ENCODE measurements at regions of chr6 and their contacts with region 1.

Region 1: DNA sequence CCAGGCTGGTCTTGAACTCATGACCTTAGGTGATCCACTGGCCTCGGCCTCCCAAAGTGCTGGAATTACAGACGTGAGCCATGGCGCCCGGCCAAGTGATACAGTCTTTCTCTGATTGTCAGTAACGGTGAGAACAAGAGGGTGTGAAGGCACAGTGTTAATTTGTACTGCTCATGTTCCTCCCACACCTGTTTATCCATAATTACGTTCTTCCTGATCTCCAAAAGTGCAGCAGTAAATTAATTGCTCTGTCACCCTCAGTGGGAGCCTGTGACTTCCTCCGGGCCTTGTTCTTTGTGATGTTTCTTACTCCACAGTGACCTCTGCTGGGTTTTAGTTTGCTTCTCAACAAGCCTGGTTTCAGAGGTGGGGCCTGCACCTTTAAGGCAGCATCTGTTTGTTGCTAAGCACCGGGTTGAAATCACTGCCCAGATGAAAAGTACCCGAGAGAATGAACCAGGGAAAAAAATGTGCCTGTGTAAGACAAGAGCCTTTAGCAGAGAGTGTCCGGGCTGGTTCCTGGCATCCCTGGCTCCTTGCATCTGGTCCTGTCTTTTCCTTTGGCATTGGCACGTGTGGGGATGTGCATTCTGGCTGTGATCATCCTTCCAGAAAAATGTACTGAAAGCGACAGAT is 89.1 kb upstream of the CLDN20 start:
- DNase-seq: no peak
- H3K4me3 ChIP-seq: no peak overlapping the region
- H3K27ac ChIP-seq: peak overlapping the region in 1 of 4 donors; percentile 31
- H3K4me1 ChIP-seq: peaks cover 17 to 37% (median 32%) of the 10 kb centered on the region in 4 donors
- H3K27me3 ChIP-seq: no peaks in the 10 kb centered on the region
- CTCF ChIP-seq: peak; percentile 62 to 72 (median 62)
- EP300 ChIP-seq: no peak
- POLR2A ChIP-seq: no peak

Region 2: GRCh38 chr6:154868143-154868594 is 306.5 kb before region 1 on chr6:
- intact Hi-C with region 1: loop called (anchors 5 kb)
- DNase-seq: no peak
- H3K4me3 ChIP-seq: no peak overlapping the region
- H3K27ac ChIP-seq: no peak overlapping the region
- H3K4me1 ChIP-seq: peaks cover 0 to 7% (median 5%) of the 10 kb centered on the region in 4 donors
- H3K27me3 ChIP-seq: no peaks in the 10 kb centered on the region
- CTCF ChIP-seq: peak; percentile 62 to 77 (median 64)
- EP300 ChIP-seq: no peak
- POLR2A ChIP-seq: no peak

Region 3: DNA sequence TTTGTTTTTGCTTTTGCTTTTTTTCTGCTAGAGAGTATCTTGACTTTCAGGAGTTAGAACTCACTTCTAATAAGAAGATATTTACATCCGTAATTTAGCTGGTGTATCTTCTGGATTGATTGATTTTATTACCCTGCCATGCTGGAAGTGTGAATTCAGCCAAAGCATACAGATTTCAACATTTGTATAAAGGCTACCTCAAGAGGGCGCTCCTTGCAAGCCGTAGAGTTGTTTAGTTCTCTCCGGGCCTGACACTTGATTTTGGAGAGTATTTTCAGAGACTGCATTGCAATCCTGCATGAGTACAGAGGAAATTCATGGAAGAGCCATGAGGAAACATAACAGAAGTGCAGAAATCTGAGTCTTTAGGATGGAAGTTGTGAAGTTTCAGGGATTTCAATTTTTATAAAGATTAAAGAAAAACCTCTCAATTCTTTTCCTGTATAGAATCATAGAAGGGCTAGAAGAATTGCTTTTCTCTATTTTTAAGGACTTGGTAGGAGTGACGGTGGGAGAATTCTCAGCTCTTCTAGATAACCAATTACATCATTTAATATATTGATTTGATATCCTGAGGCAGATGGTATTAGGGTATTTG is 246.3 kb before region 1 on chr6:
- intact Hi-C with region 1: loop called (anchors 2 kb)
- DNase-seq: no peak
- H3K4me3 ChIP-seq: no peak overlapping the region
- H3K27ac ChIP-seq: no peak overlapping the region
- H3K4me1 ChIP-seq: peaks cover 10 to 16% (median 12%) of the 10 kb centered on the region in 4 donors
- H3K27me3 ChIP-seq: no peaks in the 10 kb centered on the region
- CTCF ChIP-seq: peak; percentile 53 to 70 (median 61)
- EP300 ChIP-seq: no peak
- POLR2A ChIP-seq: no peak

Region 4: DNA sequence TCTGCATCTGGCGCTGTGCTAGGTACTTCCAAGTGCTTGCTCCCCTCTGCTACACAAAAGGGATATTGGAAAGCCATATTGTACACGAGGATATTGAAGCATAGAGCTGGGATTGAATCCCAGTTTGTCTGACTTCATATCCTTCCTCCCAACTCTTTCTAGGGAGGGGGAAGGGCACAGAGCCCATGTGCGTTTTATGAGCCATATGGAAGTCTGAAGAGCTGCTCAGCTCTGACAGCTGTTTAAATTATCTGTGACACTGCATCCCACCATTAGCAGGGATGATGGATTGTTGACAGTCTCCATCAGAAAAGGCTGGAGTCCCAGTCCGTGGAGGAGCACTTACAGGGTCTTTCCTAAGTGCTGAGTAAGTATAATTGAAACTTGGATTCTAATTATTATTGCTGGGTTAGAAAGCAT is 161.2 kb before region 1 on chr6:
- intact Hi-C with region 1: no loop called
- DNase-seq: no peak
- H3K4me3 ChIP-seq: no peak overlapping the region
- H3K27ac ChIP-seq: no peak overlapping the region
- H3K4me1 ChIP-seq: peaks cover 4 to 19% (median 13%) of the 10 kb centered on the region in 4 donors
- H3K27me3 ChIP-seq: no peaks in the 10 kb centered on the region
- CTCF ChIP-seq: no peak
- EP300 ChIP-seq: no peak
- POLR2A ChIP-seq: no peak

Region 5: GRCh38 chr6:155253337-155253736 is 78.6 kb after region 1 on chr6:
- intact Hi-C with region 1: loop called (anchors 2 kb)
- DNase-seq: no peak
- H3K4me3 ChIP-seq: no peak overlapping the region
- H3K27ac ChIP-seq: peak overlapping the region; percentile 32 to 53 (median 48)
- H3K4me1 ChIP-seq: peaks cover 4 to 19% (median 15%) of the 10 kb centered on the region in 4 donors
- H3K27me3 ChIP-seq: no peaks in the 10 kb centered on the region
- CTCF ChIP-seq: no peak
- EP300 ChIP-seq: no peak
- POLR2A ChIP-seq: no peak

Region 6: GRCh38 chr6:155432293-155432692 is 257.6 kb after region 1 on chr6:
- intact Hi-C with region 1: no loop called
- DNase-seq: no peak
- H3K4me3 ChIP-seq: no peak overlapping the region
- H3K27ac ChIP-seq: no peak overlapping the region
- H3K4me1 ChIP-seq: peaks cover 0 to 4% (median 4%) of the 10 kb centered on the region in 4 donors
- H3K27me3 ChIP-seq: no peaks in the 10 kb centered on the region
- CTCF ChIP-seq: no peak
- EP300 ChIP-seq: no peak
- POLR2A ChIP-seq: no peak

Measured in esophagus muscularis mucosa (tissue), 4 donors.